MCF 10A (cell line): ENCODE measurements at regions of chr3 and their contacts with region 1.

Region 1: DNA sequence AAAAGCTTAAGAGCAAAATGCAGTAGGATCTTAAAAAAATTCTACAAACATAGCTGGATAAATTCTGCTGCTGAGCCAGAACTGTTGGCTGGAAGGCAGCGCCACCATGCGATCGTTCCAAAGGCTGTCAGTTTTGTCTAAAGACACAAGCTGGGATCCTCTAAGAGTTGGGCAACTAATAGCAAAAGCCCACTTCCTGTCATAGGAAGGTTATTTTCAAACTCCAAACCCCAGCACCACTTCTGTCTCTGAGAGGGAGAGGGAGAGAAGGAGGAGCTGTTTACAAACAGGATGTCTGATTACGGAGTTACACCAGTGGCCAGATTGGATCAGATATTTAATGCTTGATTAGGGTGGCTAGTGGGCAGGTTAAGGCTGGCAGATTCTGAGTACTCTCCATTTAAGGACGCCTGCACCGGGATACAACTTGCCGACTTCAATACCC is 44.0 kb downstream of the EIF4E3 start:
- DNase-seq: peak; percentile 80
- H3K4me3 Mint-ChIP-seq: peak overlapping the region; percentile 33
- H3K27ac Mint-ChIP-seq: peak overlapping the region; percentile 83
- H3K4me1 Mint-ChIP-seq: peaks cover 34% of the 10 kb centered on the region
- H3K27me3 Mint-ChIP-seq: no peaks in the 10 kb centered on the region
- CTCF ChIP-seq: peak; percentile 62

Region 2: GRCh38 chr3:71657831-71658530 is 23.3 kb before region 1 on chr3:
- CTCF ChIA-PET with region 1: interaction called, 70 read pairs
- POLR2A ChIA-PET with region 1: interaction called, 23 read pairs
- intact Hi-C with region 1: loop called (anchors 1 kb)
- DNase-seq: peak; percentile 97
- H3K4me3 Mint-ChIP-seq: peak overlapping the region; percentile 56
- H3K27ac Mint-ChIP-seq: peak overlapping the region; percentile 82
- H3K4me1 Mint-ChIP-seq: peaks cover 16% of the 10 kb centered on the region
- H3K27me3 Mint-ChIP-seq: no peaks in the 10 kb centered on the region
- CTCF ChIP-seq: no peak